HCT116 (cell line): ENCODE measurements at regions of chr6 and their contacts with region 1.

Region 1: DNA sequence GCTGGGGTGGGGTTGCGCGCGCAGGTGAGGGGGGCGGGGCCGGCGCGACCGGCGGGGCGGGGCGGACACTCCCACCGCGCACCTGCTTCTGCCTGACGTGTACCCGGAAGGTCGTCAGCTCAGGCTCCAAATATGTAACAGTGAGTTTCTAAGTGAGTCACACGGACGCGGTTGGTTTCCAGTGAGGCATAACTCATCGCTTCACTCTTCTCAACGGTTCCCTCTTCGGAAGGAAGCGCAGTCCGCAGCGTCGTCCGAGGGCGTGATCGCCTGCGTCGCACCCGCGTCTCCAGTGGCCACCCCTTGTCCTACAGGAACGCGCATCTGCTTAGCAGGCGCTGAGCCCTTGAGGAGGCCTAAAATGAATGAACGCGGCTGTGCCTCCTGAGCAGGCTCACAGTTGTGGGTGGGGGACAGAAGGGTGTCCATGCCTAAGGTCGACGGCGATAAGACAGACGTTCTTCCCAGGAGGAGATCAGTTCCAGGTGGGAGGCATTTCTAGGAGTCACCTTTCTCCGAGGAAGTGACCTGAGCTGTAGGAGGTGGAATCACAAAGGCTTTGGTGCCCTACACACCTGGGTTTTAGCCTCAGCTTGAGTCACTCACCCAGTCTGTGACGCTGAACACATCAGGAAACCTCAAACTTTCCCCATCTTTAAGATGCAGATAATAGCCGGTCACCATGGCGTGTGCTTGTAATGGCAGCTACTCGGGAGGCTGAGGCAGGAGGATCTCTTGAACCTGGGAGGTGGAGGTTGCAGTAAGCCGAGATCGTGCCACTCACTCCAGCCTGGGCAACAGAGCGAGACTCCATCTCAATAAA is 50.9 kb upstream of the EZR start:
- DNase-seq: peak; percentile 99
- ATAC-seq: peak; percentile 82
- H3K4me3 ChIP-seq: peak overlapping the region; percentile 37 to 44
- H3K27ac ChIP-seq: peak overlapping the region; percentile 94
- H3K4me1 ChIP-seq: peaks cover 52 to 63% of the 10 kb centered on the region in 2 experiments
- H3K27me3 ChIP-seq: no peaks in the 10 kb centered on the region
- CTCF ChIP-seq: peak in 2 of 3 experiments; percentile 34 to 35; a peak in 4 of 6 replicates
- POLR2A ChIP-seq: peak; percentile 92
- RAD21 ChIP-seq: no peak

Region 2: GRCh38 chr6:158718461-158719046 is 151.5 kb before region 1 on chr6:
- CTCF ChIA-PET with region 1: interaction called, 3 read pairs
- POLR2A ChIA-PET with region 1: interaction called, 9 read pairs
- RAD21 ChIA-PET with region 1: interaction called, 3 to 9 read pairs
- intact Hi-C with region 1: loop called (anchors 2 kb)
- DNase-seq: peak; percentile 77
- ATAC-seq: peak; percentile 55
- H3K4me3 ChIP-seq: no peak overlapping the region
- H3K27ac ChIP-seq: peak overlapping the region; percentile 97
- H3K4me1 ChIP-seq: peaks cover 73 to 92% of the 10 kb centered on the region in 2 experiments
- H3K27me3 ChIP-seq: no peaks in the 10 kb centered on the region
- CTCF ChIP-seq: peak in 2 of 3 experiments; percentile 99 to 100; a peak in 4 of 6 replicates
- POLR2A ChIP-seq: no peak
- RAD21 ChIP-seq: no peak

Region 3: DNA sequence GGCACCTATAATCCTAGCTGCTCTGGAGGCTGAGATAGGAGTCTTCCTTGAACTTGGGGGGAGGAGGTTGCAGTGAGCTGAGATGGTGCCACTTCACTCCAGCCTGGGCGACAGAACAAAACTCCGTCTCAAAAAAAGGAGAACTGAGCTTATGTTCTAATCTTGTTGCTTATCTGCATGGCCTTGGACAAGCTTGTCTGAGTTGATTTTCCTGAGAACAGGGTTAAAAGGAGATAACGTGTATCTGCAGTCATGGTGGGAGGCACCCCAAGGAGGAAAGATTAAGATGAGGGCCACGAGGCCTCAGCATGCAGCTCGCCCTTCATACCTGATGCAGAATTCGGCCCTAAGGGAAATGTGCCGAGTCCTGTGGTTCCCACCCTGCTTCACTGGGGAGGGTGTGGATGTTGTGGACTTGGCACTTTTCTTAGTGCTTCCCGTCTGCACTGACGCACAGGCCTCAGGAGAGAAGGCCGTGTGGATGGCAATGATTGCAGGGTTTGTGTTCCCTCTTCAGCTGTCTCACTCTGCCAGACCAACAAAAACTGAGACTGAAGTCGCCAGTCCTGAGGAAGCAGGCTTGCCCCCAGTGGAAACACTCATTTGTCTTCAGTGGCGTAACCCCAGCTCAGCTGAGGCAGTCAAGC is 107.1 kb before region 1 on chr6:
- CTCF ChIA-PET with region 1: no interaction called
- POLR2A ChIA-PET with region 1: interaction called, 39 read pairs
- RAD21 ChIA-PET with region 1: no interaction called
- intact Hi-C with region 1: no loop called
- DNase-seq: no peak
- ATAC-seq: peak; percentile 8
- H3K4me3 ChIP-seq: no peak overlapping the region
- H3K27ac ChIP-seq: peak overlapping the region; percentile 57
- H3K4me1 ChIP-seq: peaks cover 38 to 100% of the 10 kb centered on the region in 2 experiments; a peak in 3 of 4 replicates
- H3K27me3 ChIP-seq: no peaks in the 10 kb centered on the region
- CTCF ChIP-seq: no peak
- POLR2A ChIP-seq: no peak
- RAD21 ChIP-seq: no peak

Region 4: DNA sequence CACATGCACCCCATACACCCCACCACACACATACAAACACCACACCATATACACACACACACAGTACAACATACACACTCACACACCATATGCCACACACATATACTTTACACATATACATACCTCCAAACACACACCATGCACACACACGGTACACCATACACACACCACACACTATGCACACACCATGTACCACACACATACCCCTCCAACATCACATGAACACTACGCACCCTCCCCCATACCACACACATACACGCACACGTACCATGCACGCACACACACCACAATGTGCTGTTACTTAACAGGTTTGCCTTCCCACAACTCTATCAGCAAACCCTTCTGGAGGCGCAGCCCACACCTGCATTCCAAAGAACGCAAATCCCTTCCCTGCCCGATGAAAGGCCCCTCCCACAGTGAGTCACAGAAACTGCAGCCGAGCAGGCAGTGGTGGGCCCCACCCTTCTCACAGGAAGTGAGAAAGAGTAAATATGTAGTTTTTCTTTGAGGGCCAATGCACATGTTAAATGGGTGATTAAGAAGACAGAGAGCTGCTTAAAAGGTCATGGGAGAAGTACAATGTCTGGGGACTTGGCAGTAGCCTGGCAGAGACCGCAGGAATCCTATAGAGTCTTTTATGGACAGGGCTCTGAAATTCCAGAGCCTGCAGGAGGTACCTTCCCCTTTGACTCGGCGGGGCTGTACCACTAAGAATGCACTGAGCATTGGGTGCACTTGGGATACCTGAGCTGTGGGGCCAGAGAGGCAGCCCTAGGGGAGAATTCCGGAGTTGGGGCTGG is 16.8 kb before region 1 on chr6:
- CTCF ChIA-PET with region 1: interaction called, 3 read pairs
- POLR2A ChIA-PET with region 1: interaction called, 109 read pairs
- RAD21 ChIA-PET with region 1: interaction called, 3 to 10 read pairs
- intact Hi-C with region 1: loop called (anchors 1 kb)
- DNase-seq: peak; percentile 97
- ATAC-seq: peak; percentile 78
- H3K4me3 ChIP-seq: peak overlapping the region; percentile 42 to 56
- H3K27ac ChIP-seq: peak overlapping the region; percentile 85
- H3K4me1 ChIP-seq: peaks cover 80 to 100% of the 10 kb centered on the region in 2 experiments
- H3K27me3 ChIP-seq: no peaks in the 10 kb centered on the region
- CTCF ChIP-seq: no peak
- POLR2A ChIP-seq: no peak
- RAD21 ChIP-seq: no peak

Region 5: DNA sequence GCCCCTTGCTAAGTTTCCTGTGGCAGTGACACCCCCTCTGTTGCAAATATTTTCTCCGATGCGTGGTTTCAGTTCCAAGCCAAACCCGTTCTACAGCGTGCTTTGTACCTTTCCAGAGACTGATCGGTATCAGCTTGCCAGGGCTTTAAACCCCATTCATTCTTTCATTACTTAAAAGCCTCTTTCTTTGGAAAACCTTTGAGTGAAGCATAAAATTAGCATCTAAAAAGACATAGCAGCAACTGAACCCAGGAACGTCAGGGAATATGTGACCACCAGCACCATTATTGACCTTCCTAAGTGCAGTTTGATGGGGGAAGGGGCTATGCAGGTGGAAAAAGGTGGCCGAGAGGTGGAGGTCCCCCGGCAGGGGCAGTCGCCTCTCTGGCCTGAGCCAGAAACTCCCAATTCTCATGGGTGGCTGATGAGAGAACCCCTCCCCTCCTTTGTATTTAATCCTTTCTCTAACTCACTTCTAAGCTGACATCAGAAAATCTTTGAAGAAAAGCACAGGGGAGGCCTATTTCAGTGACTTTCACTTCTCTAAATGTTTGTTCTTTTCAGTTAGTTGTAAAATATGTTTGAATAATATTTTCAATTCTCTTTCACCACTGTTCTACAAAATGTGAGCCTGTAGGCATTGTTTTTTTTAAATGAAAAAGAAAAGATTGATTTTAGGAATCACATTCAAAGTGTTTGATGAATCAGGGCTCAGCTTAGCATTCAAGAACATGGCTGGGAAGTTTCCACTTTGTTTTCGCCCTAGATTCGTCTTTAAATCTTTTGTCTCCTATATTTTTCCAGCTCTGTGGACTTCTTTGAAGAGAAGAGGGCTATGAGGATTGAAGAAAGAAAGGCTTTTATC is 40.7 kb after region 1 on chr6:
- CTCF ChIA-PET with region 1: no interaction called
- POLR2A ChIA-PET with region 1: interaction called, 10 read pairs
- RAD21 ChIA-PET with region 1: no interaction called
- intact Hi-C with region 1: loop called (anchors 2 kb)
- DNase-seq: no peak
- ATAC-seq: peak; percentile 42; the same call in 1 of the 2 replicates
- H3K4me3 ChIP-seq: 0 out of 4 replicates have a peak overlapping the region, but pooled peaks of 1 of the 2 experiments have one; percentile 1
- H3K27ac ChIP-seq: peak overlapping the region; percentile 32; the same call in 1 of the 2 replicates
- H3K4me1 ChIP-seq: peaks cover 28 to 35% of the 10 kb centered on the region in 2 experiments
- H3K27me3 ChIP-seq: no peaks in the 10 kb centered on the region
- CTCF ChIP-seq: no peak
- POLR2A ChIP-seq: no peak
- RAD21 ChIP-seq: no peak

Region 6: DNA sequence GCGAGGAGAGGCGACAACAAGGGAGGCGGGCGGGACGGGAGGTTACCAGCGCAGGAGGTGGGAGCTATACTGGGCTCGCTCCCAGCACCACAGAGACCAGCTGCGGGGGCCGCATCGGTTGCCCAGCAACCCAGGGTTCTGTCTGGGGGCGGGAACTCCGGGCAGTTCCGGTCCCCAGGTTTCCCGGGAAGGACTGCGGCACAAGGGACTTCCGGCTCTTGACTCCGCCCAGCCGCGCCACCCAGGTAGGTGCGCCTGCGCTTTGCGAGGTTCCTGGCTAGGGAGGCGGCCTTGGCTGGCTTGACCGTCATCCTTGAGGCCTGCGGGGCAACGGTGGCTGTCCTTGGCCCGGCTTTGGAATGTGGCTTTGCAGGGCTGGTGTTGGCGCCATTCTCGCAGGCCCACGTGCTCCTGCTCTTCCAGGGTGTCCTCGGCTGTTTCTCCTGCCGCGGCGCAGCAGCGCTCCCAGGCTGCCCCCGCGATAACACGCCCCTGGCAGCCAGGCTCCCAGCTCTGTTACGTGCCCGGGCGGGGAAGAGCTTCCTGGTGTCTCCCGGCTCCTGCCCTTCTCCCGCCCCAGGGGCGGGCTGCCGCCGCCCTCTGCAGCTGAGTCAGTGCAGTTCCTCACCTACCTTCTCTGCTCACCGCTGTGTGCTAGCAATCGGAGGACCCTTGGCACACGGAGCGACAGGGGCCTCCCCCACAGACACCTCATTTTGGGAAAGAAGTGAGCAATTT is 129.8 kb after region 1 on chr6 and contains the start of gene RSPH3:
- CTCF ChIA-PET with region 1: no interaction called
- POLR2A ChIA-PET with region 1: interaction called, 18 read pairs
- RAD21 ChIA-PET with region 1: no interaction called
- intact Hi-C with region 1: no loop called
- DNase-seq: peak; percentile 96
- ATAC-seq: peak; percentile 80
- H3K4me3 ChIP-seq: peak within 1 kb of the TSS; percentile 88 to 92
- H3K27ac ChIP-seq: peak within 1 kb of the TSS; percentile 85
- H3K4me1 ChIP-seq: peaks cover 37 to 69% of the 10 kb centered on the region in 2 experiments
- H3K27me3 ChIP-seq: no peaks in the 10 kb centered on the region
- CTCF ChIP-seq: 0 out of 6 replicates have a peak, but pooled peaks of 1 of the 3 experiments have one; percentile 7
- POLR2A ChIP-seq: peak; percentile 94
- RAD21 ChIP-seq: no peak
- total RNA-seq, gene RSPH3: 24.7 TPM

Region 7: DNA sequence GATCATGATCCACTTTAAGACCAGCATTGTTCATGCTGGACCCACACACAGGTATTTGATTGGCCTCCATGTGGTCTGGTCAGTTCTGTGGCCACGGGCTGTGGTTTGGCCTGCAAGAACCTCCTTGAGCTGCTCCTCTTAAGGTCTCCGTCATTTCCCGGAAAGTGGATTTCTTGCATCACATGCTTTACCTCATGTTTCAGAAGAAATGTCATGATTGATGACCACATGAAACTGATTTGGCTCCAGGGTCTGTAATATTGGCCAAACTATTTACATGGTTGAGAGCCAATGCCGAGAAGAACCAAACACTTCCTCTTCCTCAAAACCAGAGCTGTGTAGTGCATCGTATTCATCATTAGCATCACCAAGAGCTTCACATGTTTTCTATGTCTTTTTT is 143.2 kb after region 1 on chr6:
- CTCF ChIA-PET with region 1: no interaction called
- POLR2A ChIA-PET with region 1: no interaction called
- RAD21 ChIA-PET with region 1: no interaction called
- intact Hi-C with region 1: no loop called
- DNase-seq: no peak
- ATAC-seq: no peak
- H3K4me3 ChIP-seq: no peak overlapping the region
- H3K27ac ChIP-seq: no peak overlapping the region
- H3K4me1 ChIP-seq: peaks cover 0 to 6% of the 10 kb centered on the region in 2 experiments; a peak in 1 of 4 replicates
- H3K27me3 ChIP-seq: no peaks in the 10 kb centered on the region
- CTCF ChIP-seq: no peak
- POLR2A ChIP-seq: no peak
- RAD21 ChIP-seq: no peak